ENCODE measurements at regions of chr1 and their contacts with region 1.

Region 1: GRCh38 chr1:235075188-235075926 is 53.3 kb downstream of the TOMM20 start:
- DNase-seq: peak; percentile 63

Region 2: GRCh38 chr1:234676103-234676594 is 399.2 kb before region 1 on chr1:
- in situ Hi-C with region 1: no loop called
- DNase-seq: peak; percentile 50

Region 3: DNA sequence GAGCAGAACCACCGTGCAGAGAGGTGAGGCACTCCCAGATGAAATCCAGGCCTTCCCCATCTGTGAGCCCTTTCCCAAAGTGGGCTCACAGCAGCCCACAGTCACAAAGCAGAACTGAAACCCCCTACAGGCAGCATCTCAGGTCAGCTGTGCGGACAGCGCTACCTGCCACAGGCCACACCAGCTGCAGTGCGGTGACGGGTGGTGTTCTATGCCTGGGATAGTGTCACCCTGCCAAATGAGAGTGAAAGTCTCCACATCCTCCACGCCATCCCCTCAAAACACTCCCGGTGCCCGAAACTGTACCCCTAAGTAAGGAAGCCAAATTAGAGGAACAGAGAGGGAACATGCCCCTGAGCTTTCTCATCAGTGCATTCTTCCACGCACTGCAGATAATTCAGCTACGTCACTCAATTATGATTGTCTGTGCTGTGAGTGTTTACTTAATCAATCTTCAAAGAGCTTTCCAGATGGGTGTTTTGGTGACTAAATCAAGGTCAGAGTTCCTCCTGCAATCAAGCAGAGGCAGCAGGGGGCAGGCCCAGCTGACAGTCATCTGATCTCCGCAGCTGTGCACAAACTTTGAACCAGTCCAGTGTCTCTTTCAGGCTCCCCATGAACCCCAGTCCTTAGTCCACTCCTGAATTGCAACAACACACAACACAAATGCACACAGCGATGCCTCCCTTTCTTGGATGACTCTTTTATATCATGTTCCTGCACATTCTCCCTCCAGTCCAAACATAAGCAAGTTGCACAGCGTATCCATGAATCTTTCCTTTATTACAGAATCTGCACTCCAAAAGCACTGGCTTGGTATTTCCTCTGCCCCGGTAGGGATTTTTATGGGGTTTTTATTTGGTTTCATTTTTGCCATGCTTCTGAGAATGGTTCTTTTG is 96.7 kb before region 1 on chr1:
- in situ Hi-C with region 1: loop called (anchors 5 kb)
- DNase-seq: peak; percentile 69

Measured in Caki2 (cell line).